B cell (primary cell): ENCODE measurements at regions of chr1 and their contacts with region 1.

Region 1: GRCh38 chr1:235160957-235161684 is at the start of gene RBM34:
- DNase-seq: peak; percentile 95
- ATAC-seq: peak; percentile 92
- H3K4me3 ChIP-seq: peak within 1 kb of the TSS; percentile 67 to 97 (median 78)
- H3K4me3 Mint-ChIP-seq: peak within 1 kb of the TSS; percentile 97
- H3K27ac ChIP-seq: peak within 1 kb of the TSS; percentile 89 to 92
- H3K27ac Mint-ChIP-seq: peak within 1 kb of the TSS; percentile 99
- H3K4me1 ChIP-seq: peaks cover 12 to 21% of the 10 kb centered on the region in 2 donors
- H3K4me1 Mint-ChIP-seq: peaks cover 20% of the 10 kb centered on the region
- H3K27me3 ChIP-seq: no peaks in the 10 kb centered on the region
- H3K27me3 Mint-ChIP-seq: no peaks in the 10 kb centered on the region
- CTCF ChIP-seq: peak; percentile 25
- total RNA-seq, gene RBM34: 131 and 137 TPM in 2 replicates

Region 2: GRCh38 chr1:234478481-234479309 is 682.4 kb before region 1 on chr1 and contains the start of gene TARBP1:
- CTCF ChIA-PET with region 1: no interaction called
- POLR2A ChIA-PET with region 1: no interaction called
- intact Hi-C with region 1: loop called (anchors 2 kb)
- DNase-seq: peak; percentile 93
- ATAC-seq: peak; percentile 68
- H3K4me3 ChIP-seq: peak within 1 kb of the TSS; percentile 46 to 76 (median 68)
- H3K4me3 Mint-ChIP-seq: peak within 1 kb of the TSS; percentile 87
- H3K27ac ChIP-seq: peak within 1 kb of the TSS; percentile 49 to 69
- H3K27ac Mint-ChIP-seq: peak within 1 kb of the TSS; percentile 89
- H3K4me1 ChIP-seq: peaks cover 30 to 36% of the 10 kb centered on the region in 2 donors
- H3K4me1 Mint-ChIP-seq: peaks cover 38% of the 10 kb centered on the region
- H3K27me3 ChIP-seq: no peaks in the 10 kb centered on the region
- H3K27me3 Mint-ChIP-seq: peaks cover 6% of the 10 kb centered on the region
- CTCF ChIP-seq: no peak
- total RNA-seq, gene TARBP1: 35.4 and 36.0 TPM in 2 replicates

Region 3: DNA sequence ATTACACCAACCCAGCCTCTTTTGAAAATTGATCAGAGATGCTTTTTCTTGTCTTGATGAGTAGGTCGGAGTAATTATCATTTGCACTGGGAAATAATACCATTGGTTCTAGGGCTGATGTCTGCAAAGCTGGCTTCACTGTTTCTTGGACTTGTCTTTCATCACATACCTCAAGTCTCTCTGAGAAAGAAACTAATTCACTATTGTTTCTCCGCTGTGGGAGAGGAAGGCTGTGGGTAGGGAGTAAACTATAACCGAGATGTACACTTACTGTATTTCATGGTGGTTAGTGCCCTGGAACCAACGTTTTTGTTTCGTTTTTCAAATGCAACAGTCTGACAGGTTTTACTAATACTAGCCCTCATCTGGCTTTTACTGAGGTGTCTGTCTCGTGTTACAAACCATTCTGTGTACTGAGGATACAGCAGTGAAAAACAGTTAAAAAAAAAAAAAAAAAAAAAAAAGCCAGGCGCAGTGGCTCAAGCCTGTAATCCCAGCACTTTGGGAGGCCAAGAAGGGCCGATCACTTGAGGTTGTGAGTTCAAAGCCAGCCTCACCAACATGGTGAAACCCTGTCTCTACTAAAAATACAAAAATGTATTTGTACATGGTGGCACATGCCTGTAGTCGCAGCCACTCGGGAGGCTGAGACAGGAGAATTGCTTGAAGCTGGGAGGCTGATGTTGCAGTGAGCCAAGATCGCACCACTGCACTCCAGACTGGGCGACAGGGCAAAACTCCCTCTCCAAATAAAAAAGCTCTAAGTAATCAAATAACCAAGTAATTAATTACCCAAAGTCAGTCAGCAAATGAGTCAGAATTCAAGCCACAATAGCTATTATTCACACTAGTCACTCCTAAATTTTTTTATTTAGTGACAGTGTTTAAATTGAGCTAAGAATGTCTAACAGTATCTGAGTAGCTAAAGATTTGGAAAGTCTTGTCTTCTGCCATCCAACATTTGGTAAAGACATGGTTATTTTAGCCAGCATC is 55.8 kb before region 1 on chr1:
- CTCF ChIA-PET with region 1: interaction called, 4 read pairs
- POLR2A ChIA-PET with region 1: no interaction called
- intact Hi-C with region 1: loop called (anchors 2 kb)
- DNase-seq: no peak
- ATAC-seq: no peak
- H3K4me3 ChIP-seq: peak overlapping the region in 2 of 5 experiments; percentile 8 to 33
- H3K4me3 Mint-ChIP-seq: peak overlapping the region; percentile 84
- H3K27ac ChIP-seq: no peak overlapping the region
- H3K27ac Mint-ChIP-seq: peak overlapping the region; percentile 22
- H3K4me1 ChIP-seq: peaks cover 7 to 28% of the 10 kb centered on the region in 2 donors
- H3K4me1 Mint-ChIP-seq: peaks cover 31% of the 10 kb centered on the region
- H3K27me3 ChIP-seq: no peaks in the 10 kb centered on the region
- H3K27me3 Mint-ChIP-seq: no peaks in the 10 kb centered on the region
- CTCF ChIP-seq: no peak

Region 4: DNA sequence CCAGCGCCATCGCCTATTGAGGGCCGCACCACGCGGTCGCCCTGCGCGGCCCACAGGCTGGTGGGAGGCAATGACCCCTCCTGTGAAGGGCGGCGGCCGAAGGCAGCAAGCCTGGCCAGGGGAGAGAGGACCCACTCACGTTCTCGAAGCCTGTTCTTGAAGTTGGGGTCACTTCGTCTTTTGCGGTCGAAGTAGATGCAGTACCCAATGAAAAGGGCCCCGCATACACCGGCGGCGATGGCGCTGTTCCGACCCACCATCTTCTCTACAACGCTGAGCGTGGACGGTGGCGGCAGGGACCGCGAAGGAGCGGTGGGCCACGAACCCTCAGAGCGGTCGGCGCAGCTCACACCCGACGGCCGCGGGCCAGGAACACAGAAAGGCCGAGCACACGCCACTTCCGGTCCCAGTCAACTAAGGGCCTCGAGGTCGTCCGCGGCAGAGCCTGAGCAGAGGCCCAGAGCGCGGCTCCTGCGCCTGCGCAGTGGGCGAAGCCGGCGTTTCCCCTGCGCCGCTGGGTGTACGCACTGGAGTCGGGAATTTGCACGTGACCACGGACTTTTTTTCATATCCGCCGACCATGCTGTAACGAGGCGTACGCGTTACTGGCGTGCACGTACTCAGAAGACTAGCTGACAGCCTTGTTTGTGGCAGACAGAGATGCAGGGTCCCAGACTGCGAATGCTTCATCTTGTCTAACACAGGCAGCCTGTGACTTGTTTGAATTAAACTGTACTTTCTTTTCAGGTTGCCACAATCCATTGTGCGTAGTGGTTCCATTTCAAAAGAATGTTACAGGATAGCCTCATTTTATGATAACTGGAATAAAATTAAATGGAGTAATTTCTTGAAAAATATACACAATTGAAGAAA is 32.4 kb before region 1 on chr1 and contains the start of gene TOMM20:
- CTCF ChIA-PET with region 1: interaction called, 4 read pairs
- POLR2A ChIA-PET with region 1: interaction called, 12 read pairs
- intact Hi-C with region 1: loop called (anchors 1 kb)
- DNase-seq: peak; percentile 97
- ATAC-seq: peak; percentile 93
- H3K4me3 ChIP-seq: peak within 1 kb of the TSS; percentile 72 to 99 (median 89)
- H3K4me3 Mint-ChIP-seq: peak within 1 kb of the TSS; percentile 97
- H3K27ac ChIP-seq: peak within 1 kb of the TSS; percentile 84 to 95
- H3K27ac Mint-ChIP-seq: peak within 1 kb of the TSS; percentile 99
- H3K4me1 ChIP-seq: peaks cover 16 to 20% of the 10 kb centered on the region in 2 donors
- H3K4me1 Mint-ChIP-seq: peaks cover 35% of the 10 kb centered on the region
- H3K27me3 ChIP-seq: no peaks in the 10 kb centered on the region
- H3K27me3 Mint-ChIP-seq: no peaks in the 10 kb centered on the region
- CTCF ChIP-seq: no peak
- total RNA-seq, gene TOMM20: 73.5 and 77.3 TPM in 2 replicates

Region 5: DNA sequence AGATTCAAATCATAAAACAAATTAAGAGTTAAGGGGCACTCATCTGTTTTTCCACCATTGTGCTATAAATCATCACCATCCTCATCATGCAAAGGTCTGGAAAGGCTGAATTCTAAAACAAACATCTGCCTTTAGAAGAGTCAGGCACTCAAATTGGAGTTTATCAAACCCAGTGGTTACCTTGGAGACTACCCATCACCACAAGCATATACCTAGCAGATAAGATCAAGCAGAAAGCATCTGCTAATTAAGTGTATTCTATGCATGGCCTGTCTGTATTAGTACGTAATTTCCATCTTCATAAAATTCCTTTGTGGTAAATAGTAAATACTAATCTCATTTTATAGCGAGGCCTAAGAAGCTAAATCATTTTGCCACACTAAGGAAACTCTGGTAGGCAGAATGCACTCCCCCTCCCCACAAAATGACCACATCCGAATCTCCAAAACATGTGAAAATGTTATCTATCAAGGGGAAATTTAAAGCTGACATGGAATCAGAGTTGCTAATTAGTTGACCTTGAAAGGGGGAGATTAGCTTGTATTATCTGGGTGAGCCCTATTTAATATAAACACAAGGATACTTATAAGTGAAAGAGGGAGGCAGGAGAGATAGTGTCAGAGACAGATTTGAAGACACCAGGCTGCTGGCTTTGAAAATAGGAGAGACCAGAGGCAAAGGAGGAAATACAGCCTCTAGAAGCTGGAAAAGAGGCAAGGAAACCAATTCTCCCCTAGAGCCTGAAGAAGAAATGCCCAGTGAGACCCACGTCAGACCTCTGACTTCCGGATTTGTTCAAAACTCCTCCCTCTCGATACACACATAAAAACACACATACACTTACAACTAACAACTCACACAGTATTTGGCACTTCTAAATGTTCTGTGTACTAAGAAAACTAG is 143.7 kb after region 1 on chr1:
- CTCF ChIA-PET with region 1: no interaction called
- POLR2A ChIA-PET with region 1: no interaction called
- intact Hi-C with region 1: no loop called
- DNase-seq: peak; percentile 42
- ATAC-seq: peak; percentile 33
- H3K4me3 ChIP-seq: no peak overlapping the region
- H3K4me3 Mint-ChIP-seq: peak overlapping the region; percentile 36
- H3K27ac ChIP-seq: peak overlapping the region; percentile 44 to 68
- H3K27ac Mint-ChIP-seq: peak overlapping the region; percentile 37
- H3K4me1 ChIP-seq: peaks cover 30 to 31% of the 10 kb centered on the region in 2 donors
- H3K4me1 Mint-ChIP-seq: peaks cover 55% of the 10 kb centered on the region
- H3K27me3 ChIP-seq: no peaks in the 10 kb centered on the region
- H3K27me3 Mint-ChIP-seq: no peaks in the 10 kb centered on the region
- CTCF ChIP-seq: no peak

Region 6: GRCh38 chr1:235328357-235329138 is 167.4 kb after region 1 on chr1 and contains the start of gene GGPS1:
- CTCF ChIA-PET with region 1: no interaction called
- POLR2A ChIA-PET with region 1: interaction called, 6 read pairs
- intact Hi-C with region 1: loop called (anchors 1 kb)
- DNase-seq: peak; percentile 98
- ATAC-seq: peak; percentile 75
- H3K4me3 ChIP-seq: peak within 1 kb of the TSS; percentile 89 to 99 (median 99)
- H3K4me3 Mint-ChIP-seq: no peak within 1 kb of the TSS
- H3K27ac ChIP-seq: peak within 1 kb of the TSS; percentile 89 to 98
- H3K27ac Mint-ChIP-seq: no peak within 1 kb of the TSS
- H3K4me1 ChIP-seq: peaks cover 33 to 58% of the 10 kb centered on the region in 2 donors
- H3K4me1 Mint-ChIP-seq: peaks cover 53% of the 10 kb centered on the region
- H3K27me3 ChIP-seq: no peaks in the 10 kb centered on the region
- H3K27me3 Mint-ChIP-seq: no peaks in the 10 kb centered on the region
- CTCF ChIP-seq: peak; percentile 36
- total RNA-seq, gene GGPS1: 43.6 and 46.8 TPM in 2 replicates

Region 7: DNA sequence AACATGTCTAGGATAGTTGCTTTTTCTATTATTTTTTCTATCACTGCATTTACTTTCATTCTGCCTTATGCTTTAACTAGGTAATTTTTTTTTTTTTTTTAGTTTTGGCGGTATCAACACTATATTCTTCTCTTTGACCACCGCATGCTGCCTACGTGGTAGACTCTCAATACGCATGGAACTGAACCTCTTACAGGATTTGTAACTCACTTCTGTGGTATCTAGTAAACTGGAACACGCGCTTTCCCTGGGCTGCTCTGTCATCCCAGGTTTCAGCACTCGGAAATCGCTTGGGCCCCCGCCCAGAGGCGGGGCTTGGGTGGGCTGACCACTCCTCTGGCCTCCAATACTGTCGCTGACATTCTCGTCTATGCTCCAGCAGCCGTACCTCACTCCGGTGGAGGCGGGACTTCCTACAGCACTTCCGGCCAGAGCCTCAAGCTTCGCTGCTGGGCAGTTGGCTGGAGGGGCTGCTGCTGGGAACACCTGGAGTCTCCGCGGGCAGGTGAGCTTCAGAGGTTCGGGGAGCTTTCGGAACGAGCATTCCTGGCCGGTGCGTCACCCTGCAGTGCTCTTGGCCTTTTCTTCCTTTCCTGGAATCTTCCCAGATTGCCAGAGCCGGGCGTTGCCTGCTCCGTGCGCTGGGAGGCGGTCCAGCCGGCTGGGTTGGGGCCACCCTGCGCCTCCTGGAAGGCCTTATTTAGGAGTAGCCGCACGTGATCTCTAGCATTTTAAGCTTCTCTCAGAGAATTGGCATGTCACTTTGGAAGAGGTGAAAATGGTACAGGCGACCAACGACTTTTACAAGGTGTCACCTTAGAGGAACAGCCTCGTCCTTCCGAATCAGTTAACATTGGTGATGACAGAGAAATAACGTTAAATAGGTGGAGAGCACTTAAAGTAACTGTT is 206.1 kb after region 1 on chr1 and contains the start of gene TBCE:
- CTCF ChIA-PET with region 1: interaction called, 3 read pairs
- POLR2A ChIA-PET with region 1: no interaction called
- intact Hi-C with region 1: loop called (anchors 1 kb)
- DNase-seq: peak; percentile 84
- ATAC-seq: peak; percentile 100
- H3K4me3 ChIP-seq: peak within 1 kb of the TSS; percentile 79 to 97 (median 86)
- H3K4me3 Mint-ChIP-seq: peak within 1 kb of the TSS; percentile 99
- H3K27ac ChIP-seq: peak within 1 kb of the TSS; percentile 59 to 77
- H3K27ac Mint-ChIP-seq: peak within 1 kb of the TSS; percentile 94
- H3K4me1 ChIP-seq: peaks cover 12% of the 10 kb centered on the region in 2 donors
- H3K4me1 Mint-ChIP-seq: peaks cover 25% of the 10 kb centered on the region
- H3K27me3 ChIP-seq: no peaks in the 10 kb centered on the region
- H3K27me3 Mint-ChIP-seq: no peaks in the 10 kb centered on the region
- CTCF ChIP-seq: no peak
- total RNA-seq, gene TBCE: 18.4 and 22.1 TPM in 2 replicates